ENCODE measurements at regions of chr5 and their contacts with region 1.

Region 1: GRCh38 chr5:42583322-42583721 is 160.1 kb downstream of the GHR start:
- DNase-seq: no peak
- H3K4me3 ChIP-seq: no peak overlapping the region
- H3K27ac ChIP-seq: no peak overlapping the region
- H3K27me3 ChIP-seq: no peaks in the 10 kb centered on the region
- CTCF ChIP-seq: peak; percentile 77

Region 2: DNA sequence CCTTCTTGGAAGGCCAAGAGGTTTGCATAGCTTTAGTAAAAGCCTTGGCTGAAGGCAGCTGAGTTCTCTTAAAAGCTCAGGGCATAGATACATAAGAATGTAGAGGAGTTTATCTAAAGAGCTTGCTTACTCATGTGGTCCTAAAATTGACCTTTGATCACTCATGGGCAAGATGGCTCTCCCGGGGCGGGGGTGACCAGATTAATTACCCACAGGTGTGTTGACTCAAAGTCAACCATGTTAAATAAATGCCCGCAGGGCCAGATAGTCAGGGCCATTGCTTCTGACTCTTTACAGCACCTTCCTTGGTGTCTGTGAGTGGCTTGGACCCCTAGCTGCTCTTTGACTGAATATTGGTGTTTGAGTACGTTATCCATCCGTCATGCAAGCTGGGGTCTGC is 193.2 kb before region 1 on chr5:
- CTCF ChIA-PET with region 1: no interaction called
- POLR2A ChIA-PET with region 1: no interaction called
- DNase-seq: no peak
- H3K4me3 ChIP-seq: no peak overlapping the region
- H3K27ac ChIP-seq: no peak overlapping the region
- H3K27me3 ChIP-seq: no peaks in the 10 kb centered on the region
- CTCF ChIP-seq: no peak

Region 3: GRCh38 chr5:42423285-42424165 is 159.8 kb before region 1 on chr5 and contains the start of gene GHR:
- CTCF ChIA-PET with region 1: interaction called, 35 read pairs
- POLR2A ChIA-PET with region 1: no interaction called
- DNase-seq: peak; percentile 72
- H3K4me3 ChIP-seq: peak within 1 kb of the TSS; percentile 69
- H3K27ac ChIP-seq: no peak within 1 kb of the TSS
- H3K27me3 ChIP-seq: peaks cover 11% of the 10 kb centered on the region
- CTCF ChIP-seq: peak; percentile 78
- polyA plus RNA-seq, gene GHR: 0.48 and 0.63 TPM in 2 replicates

Region 4: GRCh38 chr5:42570966-42571960 is 12.1 kb before region 1 on chr5:
- CTCF ChIA-PET with region 1: interaction called, 19 read pairs
- POLR2A ChIA-PET with region 1: no interaction called
- DNase-seq: no peak
- H3K4me3 ChIP-seq: no peak overlapping the region
- H3K27ac ChIP-seq: no peak overlapping the region
- H3K27me3 ChIP-seq: no peaks in the 10 kb centered on the region
- CTCF ChIP-seq: no peak

Region 5: DNA sequence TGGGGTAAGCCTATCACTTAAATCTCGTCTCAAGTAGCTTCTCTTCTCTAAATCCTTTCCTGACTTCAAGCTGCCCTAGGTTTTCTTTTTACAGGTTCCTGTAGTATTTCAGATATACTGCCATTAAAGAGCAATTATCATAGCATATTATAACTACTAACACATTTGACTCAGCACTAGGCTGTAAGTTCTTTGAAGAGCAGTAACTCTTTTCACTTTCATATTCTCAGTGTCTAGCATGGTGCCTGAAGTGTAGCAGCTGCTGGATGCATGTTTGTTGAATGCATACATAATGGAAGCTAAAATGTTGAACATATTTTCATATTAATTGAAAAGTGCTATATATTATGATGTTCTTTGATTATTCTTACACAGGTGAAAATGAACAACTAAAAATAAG is 195.8 kb after region 1 on chr5:
- CTCF ChIA-PET with region 1: no interaction called
- POLR2A ChIA-PET with region 1: no interaction called
- DNase-seq: no peak
- H3K4me3 ChIP-seq: no peak overlapping the region
- H3K27ac ChIP-seq: no peak overlapping the region
- H3K27me3 ChIP-seq: no peaks in the 10 kb centered on the region
- CTCF ChIP-seq: no peak